Mammary epithelial cell (primary cell): ENCODE measurements at regions of chr18 and their contacts with region 1.

Region 1: GRCh38 chr18:55790296-55790695 is 202.3 kb upstream of the TCF4 start:
- DNase-seq: peak; percentile 72
- H3K4me3 ChIP-seq: no peak overlapping the region
- H3K27ac ChIP-seq: no peak overlapping the region
- H3K4me1 ChIP-seq: peaks cover 17% of the 10 kb centered on the region
- H3K27me3 ChIP-seq: no peaks in the 10 kb centered on the region
- CTCF ChIP-seq: no peak

Region 2: DNA sequence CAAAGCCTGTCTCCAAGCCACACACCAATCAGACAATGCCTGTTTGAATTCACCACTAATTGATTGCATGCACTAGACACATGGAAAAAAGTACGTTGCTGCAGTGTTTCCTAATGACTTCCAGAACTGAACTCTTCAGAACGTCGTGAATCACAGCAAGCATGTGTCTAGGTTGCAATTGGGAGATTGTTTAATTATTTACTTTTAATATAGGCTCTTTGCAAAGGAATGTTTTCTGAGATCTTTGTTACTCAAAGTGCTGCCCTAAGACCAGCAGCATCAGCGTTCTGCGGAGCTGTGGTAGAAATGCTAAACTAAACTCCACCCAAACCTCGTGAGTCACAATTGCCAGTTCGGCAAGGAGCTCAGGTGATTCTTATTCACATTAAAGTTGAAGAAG is 778.3 kb before region 1 on chr18:
- CTCF ChIA-PET with region 1: interaction called, 17 read pairs
- dilution Hi-C with region 1: no loop called
- in situ Hi-C with region 1: no loop called
- intact Hi-C with region 1: no loop called
- DNase-seq: no peak
- H3K4me3 ChIP-seq: no peak overlapping the region
- H3K27ac ChIP-seq: no peak overlapping the region
- H3K4me1 ChIP-seq: no peaks in the 10 kb centered on the region
- H3K27me3 ChIP-seq: no peaks in the 10 kb centered on the region
- CTCF ChIP-seq: no peak

Region 3: GRCh38 chr18:55559739-55560138 is 230.6 kb before region 1 on chr18:
- CTCF ChIA-PET with region 1: no interaction called
- dilution Hi-C with region 1: no loop called
- in situ Hi-C with region 1: no loop called
- intact Hi-C with region 1: no loop called
- DNase-seq: no peak
- H3K4me3 ChIP-seq: no peak overlapping the region
- H3K27ac ChIP-seq: no peak overlapping the region
- H3K4me1 ChIP-seq: no peaks in the 10 kb centered on the region
- H3K27me3 ChIP-seq: no peaks in the 10 kb centered on the region
- CTCF ChIP-seq: no peak

Region 4: DNA sequence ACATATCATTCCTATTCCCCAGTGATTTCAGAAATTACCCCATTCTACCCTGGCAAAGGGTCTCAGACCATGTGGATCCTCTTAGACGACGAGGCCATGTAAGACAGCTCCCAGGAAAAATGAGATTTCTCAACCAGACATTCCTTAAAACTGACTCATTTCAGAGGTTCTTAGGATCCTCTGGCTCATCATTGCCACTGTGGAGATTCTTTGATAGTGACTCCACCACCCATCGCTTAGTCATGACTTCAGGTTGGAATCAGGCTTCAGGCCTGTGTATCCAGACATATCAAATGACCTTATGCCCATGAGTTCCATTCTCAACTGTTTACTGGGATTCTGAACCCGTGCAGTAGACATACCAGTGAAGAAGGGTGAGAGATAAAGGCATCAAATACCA is 43.2 kb after region 1 on chr18:
- CTCF ChIA-PET with region 1: no interaction called
- dilution Hi-C with region 1: loop called (anchors 5 kb)
- in situ Hi-C with region 1: no loop called
- intact Hi-C with region 1: no loop called
- DNase-seq: peak; percentile 96
- H3K4me3 ChIP-seq: no peak overlapping the region
- H3K27ac ChIP-seq: peak overlapping the region; percentile 50
- H3K4me1 ChIP-seq: peaks cover 16% of the 10 kb centered on the region
- H3K27me3 ChIP-seq: no peaks in the 10 kb centered on the region
- CTCF ChIP-seq: no peak